Activated B cell treated with CpG ODN at 0.5 μM for 24 hours (primary cell): ENCODE measurements at regions of chr1 and their contacts with region 1.

Region 1: DNA sequence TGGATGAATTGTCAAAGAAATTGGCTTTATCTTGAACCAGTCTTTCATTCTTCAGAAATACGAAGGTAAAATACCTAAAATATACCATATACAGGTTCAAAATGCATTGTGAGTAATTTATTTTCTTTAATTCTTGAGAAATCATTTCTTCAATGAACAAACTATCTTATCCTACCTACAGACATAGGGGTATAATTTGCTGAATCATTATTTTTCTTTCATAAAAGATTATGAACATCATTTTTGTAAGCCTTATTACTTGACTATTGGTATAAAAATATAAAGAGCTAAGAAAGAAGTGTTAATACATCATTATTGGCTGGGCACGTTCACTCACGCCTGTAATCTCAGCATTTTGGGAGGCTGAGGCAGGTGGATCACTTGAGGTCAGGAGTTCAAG is 167.7 kb downstream of the DNAH14 start:
- DNase-seq: no peak
- ATAC-seq: no peak
- H3K4me3 Mint-ChIP-seq: no peak overlapping the region
- H3K27ac Mint-ChIP-seq: no peak overlapping the region
- H3K4me1 Mint-ChIP-seq: no peaks in the 10 kb centered on the region
- H3K27me3 Mint-ChIP-seq: no peaks in the 10 kb centered on the region
- CTCF ChIP-seq: no peak

Region 2: DNA sequence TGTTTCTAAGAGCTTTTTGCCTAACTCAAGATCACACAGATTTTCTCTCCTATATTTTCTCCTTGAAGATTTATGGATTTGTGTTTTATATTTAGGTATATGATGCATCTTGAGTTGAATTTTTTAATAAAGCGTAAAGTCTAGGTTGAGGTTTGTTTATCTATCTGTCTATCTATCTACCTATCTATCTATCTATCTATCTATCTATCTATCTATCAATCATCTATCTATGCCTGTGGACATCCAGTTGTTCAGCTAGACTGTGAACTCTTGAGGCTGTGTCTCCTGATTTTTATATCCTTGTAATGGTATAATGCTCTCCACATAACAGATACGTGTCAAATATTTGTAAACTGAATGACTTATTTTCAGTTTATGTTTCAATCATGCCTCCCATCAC is 47.6 kb before region 1 on chr1:
- CTCF ChIA-PET with region 1: no interaction called
- POLR2A ChIA-PET with region 1: no interaction called
- intact Hi-C with region 1: loop called (anchors 2 kb)
- DNase-seq: no peak
- ATAC-seq: no peak
- H3K4me3 Mint-ChIP-seq: no peak overlapping the region
- H3K27ac Mint-ChIP-seq: no peak overlapping the region
- H3K4me1 Mint-ChIP-seq: no peaks in the 10 kb centered on the region
- H3K27me3 Mint-ChIP-seq: no peaks in the 10 kb centered on the region
- CTCF ChIP-seq: no peak